ENCODE measurements at regions of chr15 and their contacts with region 1.

Region 1: DNA sequence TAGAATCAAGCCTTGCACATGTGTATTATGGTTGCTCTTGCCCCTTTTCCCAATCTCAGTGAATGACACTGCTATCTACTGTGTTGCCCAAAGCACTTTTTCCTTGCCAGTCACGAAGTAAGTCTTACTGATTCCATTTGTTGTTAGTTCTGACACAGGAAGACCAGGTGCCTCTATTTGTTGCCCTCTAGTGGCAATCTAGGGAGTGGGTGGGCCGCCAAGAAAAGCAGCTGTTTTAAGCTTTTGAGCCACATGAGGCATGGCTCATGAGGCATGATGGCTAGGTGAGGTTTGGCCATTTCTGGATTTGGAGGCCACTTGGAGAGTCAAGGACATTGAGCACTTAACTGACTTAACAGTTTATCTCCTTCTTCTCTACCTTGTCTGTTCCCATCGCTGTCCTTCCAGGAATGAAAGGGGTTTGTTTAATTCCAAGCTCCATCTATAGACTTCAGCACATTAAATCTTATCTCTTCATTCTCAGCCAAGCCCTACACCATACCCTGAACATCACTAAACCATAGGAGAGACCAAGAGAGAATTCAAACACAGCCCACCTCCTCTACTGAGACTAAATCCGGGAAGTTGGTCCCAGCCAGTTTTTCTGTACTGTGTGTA is 103.1 kb downstream of the HCN4 start:
- DNase-seq: peak; percentile 68
- ATAC-seq: peak; percentile 85
- H3K4me3 Mint-ChIP-seq: no peak overlapping the region
- H3K27ac Mint-ChIP-seq: no peak overlapping the region
- H3K4me1 Mint-ChIP-seq: no peaks in the 10 kb centered on the region
- H3K27me3 Mint-ChIP-seq: peaks cover 2% of the 10 kb centered on the region

Region 2: GRCh38 chr15:73240866-73241499 is 24.7 kb before region 1 on chr15:
- CTCF ChIA-PET with region 1: interaction called, 100 read pairs
- POLR2A ChIA-PET with region 1: no interaction called
- DNase-seq: peak; percentile 83
- ATAC-seq: peak; percentile 51
- H3K4me3 Mint-ChIP-seq: no peak overlapping the region
- H3K27ac Mint-ChIP-seq: no peak overlapping the region
- H3K4me1 Mint-ChIP-seq: no peaks in the 10 kb centered on the region
- H3K27me3 Mint-ChIP-seq: peaks cover 5% of the 10 kb centered on the region

Region 3: GRCh38 chr15:73254598-73254997 is 11.0 kb before region 1 on chr15:
- CTCF ChIA-PET with region 1: interaction called, 30 read pairs
- POLR2A ChIA-PET with region 1: no interaction called
- DNase-seq: no peak
- ATAC-seq: no peak
- H3K4me3 Mint-ChIP-seq: no peak overlapping the region
- H3K27ac Mint-ChIP-seq: no peak overlapping the region
- H3K4me1 Mint-ChIP-seq: no peaks in the 10 kb centered on the region
- H3K27me3 Mint-ChIP-seq: no peaks in the 10 kb centered on the region

Region 4: GRCh38 chr15:73283366-73283962 is 17.8 kb after region 1 on chr15:
- CTCF ChIA-PET with region 1: interaction called, 16 read pairs
- POLR2A ChIA-PET with region 1: no interaction called
- DNase-seq: no peak
- ATAC-seq: no peak
- H3K4me3 Mint-ChIP-seq: no peak overlapping the region
- H3K27ac Mint-ChIP-seq: no peak overlapping the region
- H3K4me1 Mint-ChIP-seq: no peaks in the 10 kb centered on the region
- H3K27me3 Mint-ChIP-seq: peaks cover 4% of the 10 kb centered on the region